CD8-positive, alpha-beta T cell (primary cell): ENCODE measurements at regions of chr12 and their contacts with region 1.

Region 1: DNA sequence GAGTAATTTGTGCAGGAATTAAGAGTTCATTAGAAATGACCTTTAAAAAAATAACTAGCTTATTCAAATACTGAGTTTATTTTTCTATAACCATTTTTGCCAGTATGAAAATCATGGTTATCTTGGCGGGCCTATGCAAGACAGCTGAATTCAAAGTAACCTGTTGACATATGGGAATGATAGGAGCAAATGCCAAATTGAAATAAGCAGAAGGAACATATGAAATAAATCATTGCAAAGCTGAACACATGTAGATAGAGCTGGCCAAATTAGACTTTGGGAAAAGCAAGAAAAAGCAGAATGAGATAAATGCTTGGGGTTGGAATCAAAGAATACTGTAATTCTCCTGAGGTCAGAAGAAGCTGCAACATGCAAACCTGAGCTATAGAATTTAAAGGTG is 372.5 kb downstream of the ADAMTS20 start:
- DNase-seq: no peak
- ATAC-seq: no peak
- H3K4me3 ChIP-seq: no peak overlapping the region
- H3K4me3 Mint-ChIP-seq: no peak overlapping the region
- H3K27ac ChIP-seq: no peak overlapping the region
- H3K27ac Mint-ChIP-seq: no peak overlapping the region
- H3K4me1 ChIP-seq: no peaks in the 10 kb centered on the region
- H3K4me1 Mint-ChIP-seq: no peaks in the 10 kb centered on the region
- H3K27me3 ChIP-seq: no peaks in the 10 kb centered on the region
- H3K27me3 Mint-ChIP-seq: no peaks in the 10 kb centered on the region
- CTCF ChIP-seq: no peak

Region 2: GRCh38 chr12:43226151-43226550 is 46.7 kb after region 1 on chr12:
- CTCF ChIA-PET with region 1: no interaction called
- POLR2A ChIA-PET with region 1: no interaction called
- intact Hi-C with region 1: loop called in 1 of 2 experiments (anchors 5 kb)
- DNase-seq: no peak
- ATAC-seq: no peak
- H3K4me3 ChIP-seq: no peak overlapping the region
- H3K4me3 Mint-ChIP-seq: no peak overlapping the region
- H3K27ac ChIP-seq: no peak overlapping the region
- H3K27ac Mint-ChIP-seq: no peak overlapping the region
- H3K4me1 ChIP-seq: no peaks in the 10 kb centered on the region
- H3K4me1 Mint-ChIP-seq: no peaks in the 10 kb centered on the region
- H3K27me3 ChIP-seq: no peaks in the 10 kb centered on the region
- H3K27me3 Mint-ChIP-seq: no peaks in the 10 kb centered on the region
- CTCF ChIP-seq: no peak